ENCODE measurements at regions of chr9 and their contacts with region 1.

Region 1: DNA sequence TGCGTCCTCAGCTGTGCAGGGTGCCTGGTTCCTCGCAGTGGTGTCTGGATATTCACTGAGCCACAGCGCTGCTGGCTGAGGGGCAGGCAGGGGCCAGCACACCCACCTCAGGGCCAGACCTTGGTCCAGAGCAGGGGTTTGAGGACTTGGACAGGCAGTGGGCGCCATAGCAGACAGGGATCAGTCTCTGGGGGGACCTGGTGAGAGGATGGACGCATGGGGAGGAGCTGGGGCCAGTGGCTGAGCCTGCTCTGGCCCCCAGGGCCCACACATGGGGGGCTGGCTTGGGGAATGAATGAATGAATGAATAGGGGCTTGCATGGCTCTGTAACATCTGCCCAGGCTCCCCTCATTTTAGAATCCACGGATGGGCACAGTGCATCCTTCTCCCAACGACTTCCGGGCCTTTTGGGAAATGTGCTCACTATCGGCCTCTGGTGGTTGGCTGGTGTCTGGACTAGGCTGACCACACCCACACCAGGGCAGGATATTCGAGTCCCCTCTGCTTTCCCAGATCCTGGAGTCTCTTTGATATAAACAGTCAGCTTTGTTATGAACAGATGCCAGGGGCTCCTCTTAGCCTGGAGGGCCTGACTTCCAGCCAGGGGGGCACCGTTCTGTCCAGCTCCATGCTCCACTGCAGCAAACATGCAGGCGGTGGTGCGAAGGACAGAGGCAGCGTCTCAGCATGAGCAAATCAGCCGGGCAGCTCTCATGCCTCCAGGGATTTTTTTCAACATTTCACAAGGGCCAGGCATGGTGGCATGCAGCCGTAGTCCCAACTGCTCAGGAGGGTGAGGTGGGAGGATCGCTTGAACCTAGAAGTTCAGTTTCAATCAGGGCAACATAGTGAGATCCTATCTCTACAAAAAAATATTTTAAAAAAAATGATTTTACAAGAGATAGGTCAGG is 62.6 kb downstream of the NEK6 start:
- DNase-seq: no peak
- H3K4me3 ChIP-seq: no peak overlapping the region
- CTCF ChIP-seq: peak; percentile 92

Region 2: DNA sequence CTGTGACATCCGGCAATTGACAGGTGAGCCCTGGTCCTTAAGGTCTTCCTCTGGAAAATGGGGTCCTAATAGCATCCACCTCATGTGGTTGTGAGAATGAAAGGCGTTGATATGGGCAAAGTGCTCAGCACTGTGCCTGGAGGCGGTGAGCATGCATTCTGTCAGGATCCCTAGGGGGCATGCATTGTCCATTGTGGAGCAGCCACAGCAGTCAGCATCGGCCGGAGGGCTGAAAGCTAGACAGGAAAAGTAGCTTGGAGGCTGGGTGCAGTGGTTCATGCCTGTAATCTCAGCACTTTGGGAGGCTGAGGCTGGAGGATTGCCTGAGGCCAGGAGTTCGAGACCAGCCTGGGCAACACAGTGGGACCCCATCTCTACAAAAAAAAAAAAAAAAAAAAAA is 186.6 kb before region 1 on chr9:
- CTCF ChIA-PET with region 1: interaction called, 74 read pairs
- POLR2A ChIA-PET with region 1: no interaction called
- DNase-seq: no peak
- H3K4me3 ChIP-seq: no peak overlapping the region
- CTCF ChIP-seq: peak; percentile 47

Region 3: GRCh38 chr9:124309665-124310064 is 10.7 kb before region 1 on chr9:
- CTCF ChIA-PET with region 1: interaction called, 35 read pairs
- POLR2A ChIA-PET with region 1: no interaction called
- DNase-seq: peak; percentile 85
- H3K4me3 ChIP-seq: no peak overlapping the region
- CTCF ChIP-seq: no peak